ENCODE measurements at regions of chr1 and their contacts with region 1.

Region 1: GRCh38 chr1:234499119-234499942 is 20.4 kb upstream of the TARBP1 start:
- DNase-seq: peak; percentile 55
- CTCF ChIP-seq: peak; percentile 85

Region 2: GRCh38 chr1:234533975-234534876 is 34.9 kb after region 1 on chr1:
- in situ Hi-C with region 1: no loop called
- DNase-seq: no peak
- CTCF ChIP-seq: no peak

Region 3: GRCh38 chr1:234599617-234600417 is 100.5 kb after region 1 on chr1:
- in situ Hi-C with region 1: loop called (anchors 10 kb)
- DNase-seq: peak; percentile 90
- CTCF ChIP-seq: no peak

Region 4: GRCh38 chr1:234631721-234632125 is 132.4 kb after region 1 on chr1:
- in situ Hi-C with region 1: no loop called
- DNase-seq: no peak
- CTCF ChIP-seq: no peak

Region 5: GRCh38 chr1:234978397-234979295 is 479.3 kb after region 1 on chr1:
- in situ Hi-C with region 1: loop called (anchors 10 kb)
- DNase-seq: peak; percentile 57
- CTCF ChIP-seq: peak; percentile 37

Region 6: GRCh38 chr1:235093696-235094592 is 594.6 kb after region 1 on chr1:
- in situ Hi-C with region 1: loop called (anchors 5 kb)
- DNase-seq: peak; percentile 83
- CTCF ChIP-seq: peak; percentile 87

Measured in GM13977 (cell line).